Activated naive CD4-positive, alpha-beta T cell treated with anti-CD3 and anti-CD28 coated beads for 36 hours (primary cell): ENCODE measurements at regions of chr16 and their contacts with region 1.

Region 1: GRCh38 chr16:67561824-67562525 is 351 bp upstream of the CTCF start:
- DNase-seq: peak; percentile 98
- H3K4me3 Mint-ChIP-seq: peak overlapping the region; percentile 78
- H3K27ac Mint-ChIP-seq: peak overlapping the region; percentile 86
- H3K4me1 Mint-ChIP-seq: peaks cover 45% of the 10 kb centered on the region
- H3K27me3 Mint-ChIP-seq: no peaks in the 10 kb centered on the region

Region 2: GRCh38 chr16:67246934-67247697 is 314.9 kb before region 1 on chr16 and contains the start of gene FHOD1:
- CTCF ChIA-PET with region 1: no interaction called
- intact Hi-C with region 1: loop called (anchors 5 kb)
- DNase-seq: peak; percentile 99
- H3K4me3 Mint-ChIP-seq: peak within 1 kb of the TSS; percentile 89
- H3K27ac Mint-ChIP-seq: peak within 1 kb of the TSS; percentile 76
- H3K4me1 Mint-ChIP-seq: peaks cover 51% of the 10 kb centered on the region
- H3K27me3 Mint-ChIP-seq: peaks cover 8% of the 10 kb centered on the region
- total RNA-seq, gene FHOD1: 70.7 to 73.7 TPM

Region 3: DNA sequence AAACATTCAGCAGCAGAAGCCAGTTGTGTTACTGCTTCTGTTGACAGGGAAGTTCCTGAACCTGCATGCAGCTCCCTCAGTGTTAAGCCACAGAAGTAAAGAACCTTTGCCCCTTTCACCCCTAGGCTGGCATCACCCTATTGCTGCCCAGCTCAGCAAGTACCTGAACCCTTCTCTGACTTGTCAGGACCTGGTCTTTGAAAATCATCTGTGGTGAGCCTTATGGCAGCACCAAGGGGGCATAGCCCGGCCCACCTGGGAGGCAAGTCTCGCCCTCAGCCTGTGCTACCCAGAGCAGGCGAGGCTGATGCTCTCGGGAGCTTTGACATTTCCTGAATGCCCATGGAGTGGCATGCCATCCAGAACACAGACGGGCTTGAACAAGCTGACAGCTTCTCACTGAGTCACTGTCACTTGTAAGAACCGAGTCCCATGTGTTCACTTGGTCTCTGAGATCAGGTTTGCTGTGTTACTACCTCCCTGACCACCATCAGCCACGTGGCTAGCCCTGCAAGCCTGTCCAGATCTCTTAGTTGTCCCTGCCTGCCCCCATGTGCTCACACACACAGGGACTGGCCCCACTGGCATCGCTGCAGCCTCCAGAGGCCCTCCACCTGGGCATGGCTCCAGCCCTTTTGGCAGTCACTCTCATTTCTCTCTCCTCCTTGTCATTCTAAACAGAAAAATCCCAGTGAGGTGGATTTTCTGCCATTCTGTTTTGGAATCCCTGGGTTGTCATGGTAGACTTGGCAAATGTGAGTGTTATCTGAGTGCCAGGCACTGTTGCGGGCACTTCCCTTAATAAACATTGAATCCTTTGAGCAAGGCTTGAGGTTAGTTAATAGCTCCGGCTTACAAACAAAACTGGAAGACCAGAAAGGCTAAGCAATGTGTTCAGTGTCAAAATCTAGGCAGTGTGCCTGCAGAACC is 80.1 kb after region 1 on chr16:
- CTCF ChIA-PET with region 1: interaction called, 14 read pairs
- intact Hi-C with region 1: loop called (anchors 1 kb)
- DNase-seq: no peak
- H3K4me3 Mint-ChIP-seq: no peak overlapping the region
- H3K27ac Mint-ChIP-seq: no peak overlapping the region
- H3K4me1 Mint-ChIP-seq: peaks cover 9% of the 10 kb centered on the region
- H3K27me3 Mint-ChIP-seq: no peaks in the 10 kb centered on the region

Region 4: DNA sequence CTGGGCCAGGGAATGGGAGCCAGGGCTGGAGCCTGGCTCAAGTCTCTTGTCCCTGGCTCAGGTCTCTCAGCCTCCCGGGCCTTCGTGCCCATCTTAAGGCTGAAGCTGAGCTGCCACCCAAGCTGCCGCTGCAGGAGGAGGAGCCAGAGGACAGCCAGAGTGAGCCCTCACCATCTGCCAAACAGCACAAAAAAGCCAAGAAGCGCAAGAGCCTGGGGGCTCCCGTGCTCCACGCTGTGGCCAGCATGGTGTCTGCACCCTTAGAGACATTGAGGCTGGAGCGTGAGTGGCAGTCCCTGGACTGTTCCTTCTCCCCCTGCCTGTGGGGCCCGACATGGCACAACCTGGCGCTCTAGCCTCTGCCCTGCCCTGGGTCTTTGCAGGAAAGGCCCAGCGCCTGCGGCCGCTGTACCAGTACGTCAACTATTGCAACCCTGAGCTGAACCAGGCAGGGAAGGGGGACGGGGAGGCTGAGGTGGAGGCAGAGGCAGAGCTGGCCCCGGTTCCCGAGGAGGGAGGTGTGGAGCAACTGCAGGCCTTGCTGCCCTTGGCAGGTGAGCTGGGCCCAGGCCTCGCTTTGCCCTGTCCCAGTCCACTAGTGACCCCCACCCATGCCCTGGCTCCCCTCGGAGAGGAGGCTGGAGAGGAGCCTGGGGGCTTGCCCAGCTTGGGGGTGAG is 106.0 kb after region 1 on chr16:
- CTCF ChIA-PET with region 1: interaction called, 14 read pairs
- intact Hi-C with region 1: loop called (anchors 1 kb)
- DNase-seq: peak; percentile 91
- H3K4me3 Mint-ChIP-seq: peak overlapping the region; percentile 90
- H3K27ac Mint-ChIP-seq: no peak overlapping the region
- H3K4me1 Mint-ChIP-seq: peaks cover 17% of the 10 kb centered on the region
- H3K27me3 Mint-ChIP-seq: no peaks in the 10 kb centered on the region

Region 5: GRCh38 chr16:67892899-67893742 is 331.1 kb after region 1 on chr16 and contains the start of gene PSKH1:
- CTCF ChIA-PET with region 1: no interaction called
- intact Hi-C with region 1: loop called (anchors 1 kb)
- DNase-seq: peak; percentile 98
- H3K4me3 Mint-ChIP-seq: peak within 1 kb of the TSS; percentile 79
- H3K27ac Mint-ChIP-seq: peak within 1 kb of the TSS; percentile 82
- H3K4me1 Mint-ChIP-seq: peaks cover 39% of the 10 kb centered on the region
- H3K27me3 Mint-ChIP-seq: no peaks in the 10 kb centered on the region
- total RNA-seq, gene PSKH1: 7.1 to 8.0 TPM